CD4-positive, alpha-beta memory T cell (primary cell): ENCODE measurements at regions of chr13 and their contacts with region 1.

Region 1: GRCh38 chr13:97432917-97433726 is 847 bp upstream of the RAP2A start:
- DNase-seq: peak; percentile 99 to 100 (median 99)
- H3K4me3 ChIP-seq: peak overlapping the region; percentile 93 to 97
- H3K4me3 Mint-ChIP-seq: peak overlapping the region; percentile 96 to 100 (median 98)
- H3K27ac ChIP-seq: peak overlapping the region; percentile 99
- H3K27ac Mint-ChIP-seq: peak overlapping the region; percentile 97 to 100 (median 99)
- H3K4me1 ChIP-seq: peaks cover 37% of the 10 kb centered on the region
- H3K4me1 Mint-ChIP-seq: peaks cover 20 to 41% (median 23%) of the 10 kb centered on the region in 4 donors
- H3K27me3 ChIP-seq: peaks cover 5% of the 10 kb centered on the region
- H3K27me3 Mint-ChIP-seq: peaks cover 0 to 4% of the 10 kb centered on the region in 2 donors

Region 2: GRCh38 chr13:97221989-97222700 is 211.0 kb before region 1 on chr13 and contains the start of gene MBNL2:
- CTCF ChIA-PET with region 1: interaction called, 6 read pairs
- POLR2A ChIA-PET with region 1: interaction called, 85 read pairs
- intact Hi-C with region 1: loop called (anchors 1 kb)
- DNase-seq: peak; percentile 82 to 95 (median 84)
- H3K4me3 ChIP-seq: peak within 1 kb of the TSS; percentile 49 to 76
- H3K4me3 Mint-ChIP-seq: peak within 1 kb of the TSS; percentile 91 to 96 (median 94)
- H3K27ac ChIP-seq: peak within 1 kb of the TSS; percentile 90
- H3K27ac Mint-ChIP-seq: peak within 1 kb of the TSS; percentile 96 to 99 (median 98)
- H3K4me1 ChIP-seq: peaks cover 42% of the 10 kb centered on the region
- H3K4me1 Mint-ChIP-seq: peaks cover 25 to 52% (median 34%) of the 10 kb centered on the region in 4 donors
- H3K27me3 ChIP-seq: no peaks in the 10 kb centered on the region
- H3K27me3 Mint-ChIP-seq: no peaks in the 10 kb centered on the region
- total RNA-seq, gene MBNL2: 33.0 to 36.2 TPM

Region 3: GRCh38 chr13:97367016-97367822 is 65.9 kb before region 1 on chr13:
- CTCF ChIA-PET with region 1: interaction called, 5 read pairs
- POLR2A ChIA-PET with region 1: interaction called, 18 read pairs
- intact Hi-C with region 1: loop called (anchors 2 kb)
- DNase-seq: no peak
- H3K4me3 ChIP-seq: no peak overlapping the region
- H3K4me3 Mint-ChIP-seq: peak overlapping the region in 4 of 8 donors; percentile 5 to 65 (median 9)
- H3K27ac ChIP-seq: no peak overlapping the region
- H3K27ac Mint-ChIP-seq: peak overlapping the region in 6 of 7 donors; percentile 33 to 73 (median 48)
- H3K4me1 ChIP-seq: peaks cover 9% of the 10 kb centered on the region
- H3K4me1 Mint-ChIP-seq: peaks cover 12 to 26% (median 22%) of the 10 kb centered on the region in 4 donors
- H3K27me3 ChIP-seq: no peaks in the 10 kb centered on the region
- H3K27me3 Mint-ChIP-seq: no peaks in the 10 kb centered on the region

Region 4: GRCh38 chr13:97528518-97528917 is 95.4 kb after region 1 on chr13:
- CTCF ChIA-PET with region 1: no interaction called
- POLR2A ChIA-PET with region 1: no interaction called
- intact Hi-C with region 1: no loop called
- DNase-seq: no peak
- H3K4me3 ChIP-seq: no peak overlapping the region
- H3K4me3 Mint-ChIP-seq: no peak overlapping the region
- H3K27ac ChIP-seq: no peak overlapping the region
- H3K27ac Mint-ChIP-seq: no peak overlapping the region
- H3K4me1 ChIP-seq: no peaks in the 10 kb centered on the region
- H3K4me1 Mint-ChIP-seq: no peaks in the 10 kb centered on the region
- H3K27me3 ChIP-seq: no peaks in the 10 kb centered on the region
- H3K27me3 Mint-ChIP-seq: peaks cover 0 to 3% of the 10 kb centered on the region in 2 donors

Region 5: GRCh38 chr13:97975848-97976609 is 542.9 kb after region 1 on chr13:
- CTCF ChIA-PET with region 1: no interaction called
- POLR2A ChIA-PET with region 1: interaction called, 8 read pairs
- intact Hi-C with region 1: loop called (anchors 1 kb)
- DNase-seq: peak; percentile 85 to 90 (median 88)
- H3K4me3 ChIP-seq: peak overlapping the region; percentile 38 to 75
- H3K4me3 Mint-ChIP-seq: peak overlapping the region; percentile 90 to 97 (median 94)
- H3K27ac ChIP-seq: peak overlapping the region; percentile 77
- H3K27ac Mint-ChIP-seq: peak overlapping the region; percentile 88 to 96 (median 93)
- H3K4me1 ChIP-seq: peaks cover 26% of the 10 kb centered on the region
- H3K4me1 Mint-ChIP-seq: peaks cover 20 to 37% (median 29%) of the 10 kb centered on the region in 4 donors
- H3K27me3 ChIP-seq: no peaks in the 10 kb centered on the region
- H3K27me3 Mint-ChIP-seq: no peaks in the 10 kb centered on the region

Region 6: DNA sequence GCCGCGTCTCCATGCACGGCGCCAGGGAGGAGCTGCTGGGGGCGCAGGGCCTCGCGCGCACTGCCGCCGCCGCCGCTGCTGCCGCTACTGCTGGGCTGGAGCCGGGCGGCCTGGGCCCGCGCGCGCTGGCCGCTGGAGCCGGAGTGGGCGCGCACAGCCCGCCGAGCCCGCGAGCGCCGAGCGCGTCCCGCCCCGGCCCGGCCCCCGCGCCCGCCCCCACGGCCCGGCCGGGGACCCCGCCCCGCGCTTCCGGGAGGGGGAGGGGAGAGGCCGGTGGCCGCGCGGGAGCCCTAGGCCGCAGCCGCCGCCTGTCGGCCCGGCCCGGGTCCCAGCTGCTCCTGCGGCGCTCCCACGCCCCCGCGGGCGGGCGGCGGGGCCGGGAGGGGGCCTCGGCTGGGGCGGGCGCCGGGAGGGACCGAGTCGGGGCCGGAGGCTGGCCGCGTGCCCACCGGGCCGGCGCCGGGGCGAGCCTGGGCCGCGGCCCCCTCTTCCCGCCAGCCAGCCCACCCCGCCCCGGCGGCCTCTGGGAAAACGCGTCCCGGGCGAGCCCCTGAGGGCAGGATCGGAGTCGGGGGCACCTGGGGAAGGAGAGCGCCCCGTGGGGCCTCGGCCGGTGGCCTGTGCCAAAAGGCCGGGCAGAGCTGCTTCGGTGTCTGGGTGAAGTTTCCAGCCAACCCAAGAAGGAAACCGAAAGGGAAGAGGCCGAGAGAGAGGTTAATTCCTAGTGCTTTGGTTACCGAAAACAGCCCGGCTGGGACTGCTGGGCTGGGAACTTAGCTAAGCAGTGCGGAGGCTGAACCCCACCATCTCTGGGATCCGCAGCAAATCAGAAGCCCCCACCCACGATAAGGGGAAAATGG is 1144.1 kb after region 1 on chr13 and contains the start of gene STK24:
- CTCF ChIA-PET with region 1: no interaction called
- POLR2A ChIA-PET with region 1: interaction called, 4 read pairs
- intact Hi-C with region 1: loop called (anchors 10 kb)
- DNase-seq: peak; percentile 52 to 73 (median 56)
- H3K4me3 ChIP-seq: peak within 1 kb of the TSS; percentile 74 to 75
- H3K4me3 Mint-ChIP-seq: peak within 1 kb of the TSS; percentile 89 to 97 (median 95)
- H3K27ac ChIP-seq: peak within 1 kb of the TSS; percentile 81
- H3K27ac Mint-ChIP-seq: peak within 1 kb of the TSS; percentile 92 to 97 (median 95)
- H3K4me1 ChIP-seq: peaks cover 34% of the 10 kb centered on the region
- H3K4me1 Mint-ChIP-seq: peaks cover 21 to 42% (median 33%) of the 10 kb centered on the region in 4 donors
- H3K27me3 ChIP-seq: no peaks in the 10 kb centered on the region
- H3K27me3 Mint-ChIP-seq: no peaks in the 10 kb centered on the region
- total RNA-seq, gene STK24: 146 to 147 TPM